ENCODE measurements at regions of chr7 and their contacts with region 1.

Region 1: GRCh38 chr7:98755128-98755898 is 114.5 kb downstream of the TMEM130 start:
- DNase-seq: peak; percentile 64 to 65
- H3K4me3 ChIP-seq: no peak overlapping the region
- H3K4me3 Mint-ChIP-seq: no peak overlapping the region
- H3K27ac Mint-ChIP-seq: no peak overlapping the region
- H3K4me1 ChIP-seq: no peaks in the 10 kb centered on the region
- H3K4me1 Mint-ChIP-seq: no peaks in the 10 kb centered on the region
- H3K27me3 ChIP-seq: no peaks in the 10 kb centered on the region
- H3K27me3 Mint-ChIP-seq: no peaks in the 10 kb centered on the region
- CTCF ChIP-seq: peak; percentile 27 to 45

Region 2: GRCh38 chr7:98841179-98841997 is 86.1 kb after region 1 on chr7:
- CTCF ChIA-PET with region 1: interaction called, 5 read pairs
- POLR2A ChIA-PET with region 1: no interaction called
- intact Hi-C with region 1: loop called (anchors 1 kb)
- DNase-seq: peak; percentile 57 to 76
- H3K4me3 ChIP-seq: no peak overlapping the region
- H3K4me3 Mint-ChIP-seq: no peak overlapping the region
- H3K27ac Mint-ChIP-seq: no peak overlapping the region
- H3K4me1 ChIP-seq: no peaks in the 10 kb centered on the region
- H3K4me1 Mint-ChIP-seq: no peaks in the 10 kb centered on the region
- H3K27me3 ChIP-seq: no peaks in the 10 kb centered on the region
- H3K27me3 Mint-ChIP-seq: peaks cover 2% of the 10 kb centered on the region
- CTCF ChIP-seq: peak; percentile 94 to 98

Measured in Caco-2 (cell line).